CD8-positive, alpha-beta T cell (primary cell): ENCODE measurements at regions of chr10 and their contacts with region 1.

Region 1: GRCh38 chr10:30792025-30792424 is 162.5 kb upstream of the LYZL2 start:
- DNase-seq: peak in 2 of 9 experiments; percentile 45 to 57
- ATAC-seq: peak; percentile 58
- H3K4me3 ChIP-seq: peak overlapping the region in 1 of 2 experiments; percentile 7
- H3K4me3 Mint-ChIP-seq: peak overlapping the region; percentile 65
- H3K27ac ChIP-seq: peak overlapping the region in 1 of 2 experiments; percentile 49
- H3K27ac Mint-ChIP-seq: peak overlapping the region; percentile 91
- H3K4me1 ChIP-seq: peaks cover 21% of the 10 kb centered on the region
- H3K4me1 Mint-ChIP-seq: peaks cover 39% of the 10 kb centered on the region
- H3K27me3 ChIP-seq: no peaks in the 10 kb centered on the region
- H3K27me3 Mint-ChIP-seq: no peaks in the 10 kb centered on the region
- CTCF ChIP-seq: no peak

Region 2: GRCh38 chr10:30775779-30776591 is 16.0 kb before region 1 on chr10:
- CTCF ChIA-PET with region 1: no interaction called
- POLR2A ChIA-PET with region 1: no interaction called
- intact Hi-C with region 1: no loop called
- DNase-seq: no peak
- ATAC-seq: no peak
- H3K4me3 ChIP-seq: no peak overlapping the region
- H3K4me3 Mint-ChIP-seq: no peak overlapping the region
- H3K27ac ChIP-seq: no peak overlapping the region
- H3K27ac Mint-ChIP-seq: no peak overlapping the region
- H3K4me1 ChIP-seq: no peaks in the 10 kb centered on the region
- H3K4me1 Mint-ChIP-seq: no peaks in the 10 kb centered on the region
- H3K27me3 ChIP-seq: peaks cover 0 to 3% of the 10 kb centered on the region in 2 experiments
- H3K27me3 Mint-ChIP-seq: no peaks in the 10 kb centered on the region
- CTCF ChIP-seq: no peak

Region 3: DNA sequence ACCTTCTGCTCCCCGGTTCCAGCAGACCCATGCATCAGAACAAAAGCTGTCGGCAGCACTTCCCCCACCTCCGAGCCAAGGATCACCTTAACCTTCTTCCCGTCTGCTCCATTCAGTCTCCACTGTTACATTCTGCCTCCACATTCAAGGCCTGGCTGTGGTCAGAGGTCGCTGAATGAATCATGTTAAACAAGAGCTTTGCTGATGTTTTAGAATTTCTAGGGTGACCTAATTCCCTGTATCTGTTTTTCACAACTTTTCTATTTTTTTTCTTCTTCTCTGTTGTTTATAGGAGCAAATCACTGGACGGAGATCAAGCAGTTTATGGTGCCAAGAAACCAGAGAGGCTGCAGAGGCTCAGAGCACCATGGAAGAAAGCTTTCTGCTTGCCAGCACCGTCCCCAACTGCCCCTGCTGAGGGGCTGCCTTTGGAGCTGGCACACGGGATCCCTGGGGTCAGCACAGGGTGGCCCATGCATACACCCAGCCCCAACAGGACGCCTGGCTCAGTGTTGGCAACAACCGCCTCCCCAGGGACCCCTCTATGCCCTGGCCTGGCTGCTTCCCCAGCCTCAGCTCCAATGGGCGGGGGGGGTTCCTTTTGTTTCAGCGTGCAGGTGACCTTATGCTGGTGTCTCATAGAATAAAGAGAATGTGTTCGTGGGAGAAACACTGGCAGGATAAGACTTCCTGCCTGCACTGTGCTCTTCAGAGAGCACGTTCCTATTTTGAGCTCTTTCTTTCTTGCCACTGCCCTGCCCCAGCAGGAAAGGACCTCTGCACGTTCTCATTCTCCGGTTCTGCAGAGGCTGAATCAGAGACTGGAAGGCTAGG is 20.2 kb after region 1 on chr10:
- CTCF ChIA-PET with region 1: interaction called, 3 read pairs
- POLR2A ChIA-PET with region 1: no interaction called
- intact Hi-C with region 1: loop called in 1 of 2 experiments (anchors 2 kb)
- DNase-seq: peak in 1 of 9 experiments; percentile 10
- ATAC-seq: peak; percentile 52
- H3K4me3 ChIP-seq: no peak overlapping the region
- H3K4me3 Mint-ChIP-seq: peak overlapping the region; percentile 58
- H3K27ac ChIP-seq: no peak overlapping the region
- H3K27ac Mint-ChIP-seq: peak overlapping the region; percentile 50
- H3K4me1 ChIP-seq: peaks cover 16% of the 10 kb centered on the region
- H3K4me1 Mint-ChIP-seq: peaks cover 29% of the 10 kb centered on the region
- H3K27me3 ChIP-seq: no peaks in the 10 kb centered on the region
- H3K27me3 Mint-ChIP-seq: no peaks in the 10 kb centered on the region
- CTCF ChIP-seq: no peak

Region 4: GRCh38 chr10:30840406-30841050 is 48.5 kb after region 1 on chr10:
- CTCF ChIA-PET with region 1: no interaction called
- POLR2A ChIA-PET with region 1: no interaction called
- intact Hi-C with region 1: loop called in 1 of 2 experiments (anchors 1 kb)
- DNase-seq: no peak
- ATAC-seq: no peak
- H3K4me3 ChIP-seq: no peak overlapping the region
- H3K4me3 Mint-ChIP-seq: no peak overlapping the region
- H3K27ac ChIP-seq: no peak overlapping the region
- H3K27ac Mint-ChIP-seq: peak overlapping the region; percentile 37
- H3K4me1 ChIP-seq: no peaks in the 10 kb centered on the region
- H3K4me1 Mint-ChIP-seq: no peaks in the 10 kb centered on the region
- H3K27me3 ChIP-seq: no peaks in the 10 kb centered on the region
- H3K27me3 Mint-ChIP-seq: no peaks in the 10 kb centered on the region
- CTCF ChIP-seq: no peak

Region 5: GRCh38 chr10:31353574-31353973 is 561.5 kb after region 1 on chr10:
- CTCF ChIA-PET with region 1: no interaction called
- POLR2A ChIA-PET with region 1: no interaction called
- intact Hi-C with region 1: no loop called
- DNase-seq: peak in 3 of 9 experiments; percentile 31 to 53 (median 39)
- ATAC-seq: peak; percentile 87
- H3K4me3 ChIP-seq: no peak overlapping the region
- H3K4me3 Mint-ChIP-seq: no peak overlapping the region
- H3K27ac ChIP-seq: no peak overlapping the region
- H3K27ac Mint-ChIP-seq: no peak overlapping the region
- H3K4me1 ChIP-seq: peaks cover 9% of the 10 kb centered on the region
- H3K4me1 Mint-ChIP-seq: peaks cover 63% of the 10 kb centered on the region
- H3K27me3 ChIP-seq: no peaks in the 10 kb centered on the region
- H3K27me3 Mint-ChIP-seq: no peaks in the 10 kb centered on the region
- CTCF ChIP-seq: no peak